Heart left ventricle (tissue), 16 donors: ENCODE measurements at regions of chr9 and their contacts with region 1.

Region 1: DNA sequence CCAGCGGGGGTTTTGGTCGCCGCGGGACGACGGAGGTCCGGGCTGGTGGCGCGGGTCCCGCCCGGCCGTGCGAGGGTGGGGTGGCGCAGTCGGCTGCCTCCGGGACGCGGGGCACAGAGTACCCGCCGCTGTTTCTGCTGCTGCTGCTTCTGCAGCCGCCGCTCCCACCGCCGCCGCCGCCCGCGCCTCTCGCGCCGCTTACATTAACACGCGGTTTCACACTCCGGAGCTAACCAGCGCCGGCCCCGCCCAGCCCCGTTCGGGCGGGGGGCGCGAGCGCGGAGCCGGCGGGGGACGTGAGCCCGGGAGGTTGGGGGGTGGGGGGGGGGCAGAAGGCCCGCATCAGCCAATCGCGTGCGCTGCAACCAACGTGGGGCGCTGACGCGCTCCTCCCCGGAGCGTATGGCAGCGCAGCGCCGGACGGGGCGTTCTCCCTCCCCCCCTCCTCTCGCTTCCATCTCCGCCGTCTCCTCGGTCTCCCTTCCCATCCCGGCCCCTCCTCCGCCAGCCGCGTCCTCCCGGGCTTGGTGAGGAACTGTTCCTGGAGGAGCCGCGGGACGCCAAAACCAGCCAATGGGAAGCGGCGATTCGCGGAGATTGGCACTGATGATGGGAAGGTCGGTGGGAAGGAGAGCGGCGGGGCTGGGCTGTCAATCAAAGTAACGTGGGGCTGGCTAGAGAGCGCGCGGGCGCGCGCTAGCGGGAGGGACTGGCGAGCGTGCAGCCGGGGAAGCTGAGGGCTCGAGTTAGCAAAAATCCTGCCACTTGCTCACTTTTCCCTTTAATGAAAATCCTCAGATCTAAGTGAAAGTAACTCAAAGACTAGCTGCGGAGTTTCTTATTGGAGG is at the start of gene TLE1:
- DNase-seq: peak; percentile 99 to 100 (median 100)
- ATAC-seq: peak; percentile 97 to 99 (median 98)
- H3K4me3 ChIP-seq: peak within 1 kb of the TSS; percentile 62 to 80 (median 70)
- H3K27ac ChIP-seq: peak within 1 kb of the TSS; percentile 73 to 91 (median 81)
- H3K4me1 ChIP-seq: peaks cover 0 to 42% (median 14%) of the 10 kb centered on the region in 12 donors
- H3K27me3 ChIP-seq: peaks cover 0 to 7% (median 0%) of the 10 kb centered on the region in 9 donors
- CTCF ChIP-seq: peak in 1 of 12 donors; percentile 18
- POLR2A ChIP-seq: peak; percentile 37 to 92
- total RNA-seq, gene TLE1: 6.2 to 25.4 (median 12.0) TPM

Region 2: DNA sequence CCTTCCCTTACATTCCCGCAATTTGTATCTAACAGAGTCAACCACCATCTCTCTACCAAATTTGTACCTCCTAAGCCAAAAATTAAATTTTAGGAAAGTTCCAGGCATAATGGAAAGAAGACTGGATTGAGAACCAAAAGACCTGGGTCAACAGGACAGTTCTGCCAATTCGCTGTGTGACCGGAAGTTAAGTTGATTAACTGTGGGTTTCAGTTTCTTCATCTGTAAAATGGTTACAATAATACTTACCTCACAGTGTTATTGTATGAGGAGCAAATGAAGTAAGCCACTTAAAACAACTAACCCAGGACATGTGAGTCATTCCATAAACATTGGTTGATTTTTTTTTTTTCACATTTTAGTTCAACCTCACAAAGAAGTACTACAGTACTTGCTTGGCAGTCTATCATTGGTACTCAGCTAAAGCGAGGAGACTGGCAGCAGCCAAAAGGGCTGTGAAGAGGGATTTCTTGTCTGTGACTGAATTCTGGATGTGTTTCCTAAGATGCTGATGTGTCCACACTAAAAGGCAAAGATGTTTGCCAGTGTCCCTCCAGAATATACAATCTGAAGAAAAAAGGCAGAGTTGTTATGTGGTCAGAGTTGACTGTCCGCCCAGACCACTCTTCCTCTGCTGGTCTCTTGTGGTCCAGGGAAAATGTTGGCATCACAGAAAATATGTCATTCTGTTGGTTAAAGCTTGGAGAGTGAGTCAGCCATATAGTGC is 198.8 kb before region 1 on chr9:
- intact Hi-C with region 1: no loop called
- DNase-seq: no peak
- ATAC-seq: no peak
- H3K4me3 ChIP-seq: no peak overlapping the region
- H3K27ac ChIP-seq: no peak overlapping the region
- H3K4me1 ChIP-seq: no peaks in the 10 kb centered on the region
- H3K27me3 ChIP-seq: no peaks in the 10 kb centered on the region
- CTCF ChIP-seq: no peak
- POLR2A ChIP-seq: no peak

Region 3: DNA sequence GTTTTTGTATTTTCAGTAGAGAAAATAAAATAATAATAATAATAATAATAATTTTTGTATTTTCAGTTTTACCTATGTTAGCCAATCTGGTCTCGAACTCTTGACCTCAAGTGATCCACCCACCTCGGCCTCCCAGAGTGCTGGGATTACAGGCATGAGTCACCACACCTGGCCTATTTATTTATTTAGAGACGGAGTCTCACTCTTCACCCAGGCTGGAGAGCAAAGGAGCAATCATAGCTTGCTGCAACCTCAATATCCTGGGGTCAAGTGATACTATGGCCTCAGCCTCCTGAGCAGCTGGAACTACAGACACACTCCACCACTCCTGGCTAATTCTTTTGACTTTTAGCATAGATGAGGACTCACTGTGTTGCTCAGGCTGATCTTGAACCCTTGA is 167.7 kb before region 1 on chr9:
- intact Hi-C with region 1: loop called (anchors 1 to 10 kb)
- DNase-seq: no peak
- ATAC-seq: no peak
- H3K4me3 ChIP-seq: no peak overlapping the region
- H3K27ac ChIP-seq: no peak overlapping the region
- H3K4me1 ChIP-seq: peaks cover 0 to 7% (median 0%) of the 10 kb centered on the region in 12 donors
- H3K27me3 ChIP-seq: no peaks in the 10 kb centered on the region
- CTCF ChIP-seq: no peak
- POLR2A ChIP-seq: no peak

Region 4: DNA sequence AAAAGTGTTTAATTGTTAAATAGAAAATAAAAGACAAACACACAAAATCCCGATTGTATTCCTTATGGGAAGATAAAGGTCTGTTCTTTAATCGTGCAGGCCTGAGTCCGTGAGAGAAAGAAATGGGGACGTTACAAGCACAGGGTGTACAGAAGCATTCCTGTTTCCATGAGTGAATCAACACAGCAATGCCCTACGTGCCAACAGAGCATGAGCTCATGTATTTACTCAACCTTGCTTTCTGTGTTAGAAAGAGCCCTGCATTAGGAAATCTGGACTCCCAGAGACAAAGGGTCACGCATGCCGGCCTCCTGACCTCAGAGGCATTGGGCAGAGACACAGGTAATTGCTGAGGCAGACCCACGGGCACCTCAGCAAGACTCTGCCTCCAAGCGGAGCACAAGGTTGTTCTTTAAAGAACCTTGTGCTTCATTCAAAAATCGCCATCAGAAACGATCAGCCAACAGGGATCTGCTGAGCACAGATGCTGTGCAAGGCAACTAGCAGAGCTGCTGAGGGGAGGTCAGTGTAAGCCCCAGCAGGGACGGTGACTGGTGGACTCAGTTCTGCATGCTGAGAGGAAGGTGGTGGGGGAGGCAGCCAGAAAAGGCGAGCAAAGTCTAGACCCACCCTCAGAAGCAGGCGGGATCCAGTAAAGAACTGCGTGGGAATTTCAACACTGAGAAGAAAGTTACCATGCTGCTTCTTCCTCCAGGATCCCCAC is 101.3 kb before region 1 on chr9:
- intact Hi-C with region 1: loop called in 1 of 10 experiments (anchors 5 kb)
- DNase-seq: no peak
- ATAC-seq: peak; percentile 46 to 80 (median 72)
- H3K4me3 ChIP-seq: no peak overlapping the region
- H3K27ac ChIP-seq: peak overlapping the region in 2 of 12 donors; percentile 28 to 40
- H3K4me1 ChIP-seq: peaks cover 0 to 26% (median 9%) of the 10 kb centered on the region in 12 donors
- H3K27me3 ChIP-seq: no peaks in the 10 kb centered on the region
- CTCF ChIP-seq: no peak
- POLR2A ChIP-seq: no peak

Region 5: GRCh38 chr9:81609782-81610739 is 79.5 kb before region 1 on chr9:
- intact Hi-C with region 1: loop called in 3 of 10 experiments (anchors 5 kb)
- DNase-seq: no peak
- ATAC-seq: no peak
- H3K4me3 ChIP-seq: no peak overlapping the region
- H3K27ac ChIP-seq: peak overlapping the region in 1 of 12 donors; percentile 5
- H3K4me1 ChIP-seq: peaks cover 0 to 28% (median 11%) of the 10 kb centered on the region in 12 donors
- H3K27me3 ChIP-seq: no peaks in the 10 kb centered on the region
- CTCF ChIP-seq: no peak
- POLR2A ChIP-seq: no peak

Region 6: DNA sequence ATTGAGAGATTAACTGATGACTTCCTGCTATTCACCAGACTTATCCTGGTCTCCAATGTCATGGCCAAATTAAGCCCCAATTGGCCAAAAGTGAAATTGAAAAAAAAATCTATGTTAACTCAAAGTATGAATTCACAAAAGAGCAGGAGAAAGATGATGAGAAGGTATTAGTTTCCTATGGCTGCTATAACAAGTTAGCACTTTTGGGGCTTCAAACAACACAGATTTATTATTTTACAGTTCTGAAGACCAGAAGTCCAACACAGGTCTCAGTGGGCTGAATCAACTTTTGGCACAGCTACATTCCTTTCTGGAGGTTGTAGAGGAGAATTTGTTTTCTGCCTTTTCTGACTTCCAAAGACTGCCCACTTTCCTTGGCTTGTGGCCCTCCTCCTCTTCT is 78.4 kb after region 1 on chr9:
- intact Hi-C with region 1: no loop called
- DNase-seq: no peak
- ATAC-seq: no peak
- H3K4me3 ChIP-seq: no peak overlapping the region
- H3K27ac ChIP-seq: no peak overlapping the region
- H3K4me1 ChIP-seq: no peaks in the 10 kb centered on the region
- H3K27me3 ChIP-seq: no peaks in the 10 kb centered on the region
- CTCF ChIP-seq: no peak
- POLR2A ChIP-seq: no peak

Region 7: GRCh38 chr9:81848472-81848871 is 158.9 kb after region 1 on chr9:
- intact Hi-C with region 1: loop called in 3 of 10 experiments (anchors 2 to 10 kb)
- DNase-seq: no peak
- ATAC-seq: no peak
- H3K4me3 ChIP-seq: no peak overlapping the region
- H3K27ac ChIP-seq: no peak overlapping the region
- H3K4me1 ChIP-seq: peaks cover 0 to 16% (median 9%) of the 10 kb centered on the region in 12 donors
- H3K27me3 ChIP-seq: peaks cover 0 to 4% (median 0%) of the 10 kb centered on the region in 9 donors
- CTCF ChIP-seq: peak in 11 of 12 donors; percentile 17 to 60 (median 32)
- POLR2A ChIP-seq: no peak

Region 8: GRCh38 chr9:82606492-82607382 is 917.2 kb after region 1 on chr9:
- intact Hi-C with region 1: loop called in 2 of 10 experiments (anchors 10 kb)
- DNase-seq: peak in 3 of 5 donors; percentile 15 to 43 (median 40)
- ATAC-seq: peak in 3 of 4 donors; percentile 68 to 87 (median 79)
- H3K4me3 ChIP-seq: no peak overlapping the region
- H3K27ac ChIP-seq: no peak overlapping the region
- H3K4me1 ChIP-seq: peaks cover 0 to 25% (median 5%) of the 10 kb centered on the region in 12 donors
- H3K27me3 ChIP-seq: peaks cover 0 to 10% (median 0%) of the 10 kb centered on the region in 9 donors
- CTCF ChIP-seq: peak; percentile 48 to 80 (median 70)
- POLR2A ChIP-seq: no peak